BJ (cell line): ENCODE measurements at regions of chr14 and their contacts with region 1.

Region 1: DNA sequence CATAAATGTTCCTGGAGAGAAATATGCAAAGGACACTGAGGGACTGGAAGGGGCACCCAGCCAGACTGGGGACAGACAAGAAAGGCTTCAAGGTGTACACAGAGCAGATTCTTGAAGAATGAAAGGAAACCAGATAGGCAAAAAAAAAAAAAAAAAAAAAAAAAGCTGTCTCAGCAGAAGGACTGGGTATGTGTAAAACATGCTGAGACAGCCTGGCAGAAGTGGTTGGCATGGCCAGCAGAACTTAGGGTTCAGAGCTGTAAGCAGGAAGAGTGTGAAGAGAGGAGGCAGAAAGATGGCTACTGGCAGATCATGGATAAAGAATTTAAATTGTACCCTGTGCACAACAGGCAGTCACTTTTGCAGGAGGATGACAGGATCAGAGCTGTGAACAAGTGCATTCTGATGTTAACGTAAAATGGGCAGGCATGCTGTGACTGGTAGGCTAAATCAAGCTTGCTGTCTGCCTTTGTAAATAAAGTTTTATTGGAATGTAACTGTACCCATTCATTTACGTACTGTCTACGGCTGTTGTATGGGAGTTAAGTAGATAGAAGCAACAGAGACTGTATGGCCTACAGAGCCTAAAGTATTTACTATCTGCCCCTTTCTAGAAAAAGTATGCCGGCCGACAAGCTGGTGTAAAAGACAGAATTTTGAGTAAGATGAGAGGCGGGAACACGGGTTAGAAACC is 42.2 kb downstream of the UBR7 start:
- DNase-seq: no peak
- H3K4me3 ChIP-seq: no peak overlapping the region
- H3K27me3 ChIP-seq: no peaks in the 10 kb centered on the region
- CTCF ChIP-seq: no peak

Region 2: DNA sequence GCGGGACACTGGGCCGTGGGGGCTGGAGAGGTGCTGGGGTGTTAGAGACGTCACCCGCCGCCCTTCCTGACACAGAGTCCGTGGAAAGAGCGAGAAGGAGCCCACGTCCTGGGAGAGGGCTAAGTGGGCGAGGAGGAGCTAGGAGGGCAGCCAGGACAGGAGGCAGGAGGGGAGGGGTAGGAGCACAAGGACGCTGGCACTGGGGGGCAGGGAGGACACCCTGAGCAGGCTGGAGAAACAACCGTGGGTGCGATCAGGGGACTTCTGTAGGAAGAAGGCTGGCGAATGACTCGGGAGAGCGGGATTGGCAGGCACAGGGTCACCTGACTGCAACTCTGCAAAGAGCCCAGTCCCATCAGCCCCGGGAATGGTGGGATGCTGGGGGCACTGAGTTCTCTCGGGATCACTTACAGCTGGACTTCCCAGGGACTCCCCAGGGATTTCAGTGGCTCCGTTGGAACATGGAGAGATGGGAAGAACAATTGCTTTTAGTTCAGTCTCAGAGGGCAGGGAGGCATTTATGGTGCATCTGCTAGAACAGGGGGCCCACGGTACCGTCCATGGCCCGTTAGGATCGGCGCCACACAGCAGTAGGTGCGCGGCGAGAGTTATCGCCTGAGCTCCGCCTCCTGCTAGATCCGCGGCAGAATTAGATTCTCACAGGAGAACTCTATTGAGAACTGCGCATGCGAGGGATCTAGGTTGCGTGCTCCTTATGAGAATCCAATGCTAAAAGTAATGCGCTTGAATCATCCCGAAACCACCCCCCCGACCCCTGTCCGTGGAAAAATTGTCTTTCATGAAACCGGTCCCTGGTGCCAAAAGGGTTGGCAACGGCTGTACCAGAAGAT is 17.9 kb before region 1 on chr14:
- CTCF ChIA-PET with region 1: interaction called, 3 read pairs
- POLR2A ChIA-PET with region 1: interaction called, 22 read pairs
- DNase-seq: peak; percentile 10
- H3K4me3 ChIP-seq: peak overlapping the region; percentile 48
- H3K27me3 ChIP-seq: no peaks in the 10 kb centered on the region
- CTCF ChIP-seq: no peak

Region 3: GRCh38 chr14:93263416-93263815 is 14.1 kb after region 1 on chr14:
- CTCF ChIA-PET with region 1: no interaction called
- POLR2A ChIA-PET with region 1: no interaction called
- DNase-seq: no peak
- H3K4me3 ChIP-seq: no peak overlapping the region
- H3K27me3 ChIP-seq: no peaks in the 10 kb centered on the region
- CTCF ChIP-seq: no peak